AG04449 (cell line): ENCODE measurements at regions of chr2 and their contacts with region 1.

Region 1: DNA sequence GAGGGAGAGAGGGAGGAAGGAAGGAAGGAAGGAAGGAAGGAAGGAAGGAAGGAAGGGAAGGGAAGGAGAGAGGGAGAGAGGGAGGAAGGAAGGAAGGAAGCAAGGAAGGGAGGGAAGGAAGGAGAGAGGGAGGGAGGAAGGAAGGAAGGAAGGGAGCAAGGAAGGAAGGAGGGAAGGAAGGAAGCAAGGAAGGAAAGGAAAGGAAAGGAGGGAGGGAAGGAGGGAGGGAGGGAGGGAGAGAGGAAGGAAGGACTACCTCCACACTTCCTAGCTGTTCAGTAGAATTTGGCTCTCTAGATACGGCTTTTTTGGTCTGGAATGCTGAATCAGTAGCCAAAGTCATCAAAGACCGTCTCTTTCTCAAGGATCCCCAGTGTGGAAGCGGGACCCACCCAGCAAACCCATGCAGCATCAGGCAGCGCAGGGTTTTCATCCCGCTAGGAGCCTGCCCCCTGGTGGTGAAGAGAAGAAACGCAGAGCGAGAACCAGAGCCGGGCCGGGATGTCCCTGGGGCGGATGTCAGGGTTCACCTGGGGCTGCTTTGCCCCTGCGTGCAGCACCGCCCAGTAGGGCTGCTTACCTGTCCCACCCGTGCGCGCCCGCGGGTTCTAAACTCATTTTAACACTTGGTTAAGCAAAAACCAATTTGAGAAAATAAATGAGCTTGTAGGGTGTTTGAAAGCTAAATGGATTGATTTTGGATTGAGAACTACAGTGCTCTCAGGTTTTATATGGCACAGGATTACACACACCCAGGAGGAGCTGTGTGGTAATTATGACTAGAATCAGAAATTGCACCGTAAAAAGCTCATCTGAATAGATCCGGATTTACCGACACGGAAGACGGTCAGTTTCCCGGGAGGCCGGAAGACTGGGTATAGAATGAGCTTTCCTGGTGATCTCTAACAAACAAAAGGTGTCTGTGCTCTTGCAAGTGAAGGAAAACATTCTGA is 48.1 kb upstream of the ARL4C start:
- DNase-seq: no peak
- H3K4me3 ChIP-seq: no peak overlapping the region
- CTCF ChIP-seq: peak; percentile 92

Region 2: GRCh38 chr2:233976690-233977294 is 568.1 kb before region 1 on chr2:
- CTCF ChIA-PET with region 1: interaction called, 164 read pairs
- POLR2A ChIA-PET with region 1: no interaction called
- DNase-seq: peak; percentile 17
- H3K4me3 ChIP-seq: no peak overlapping the region
- CTCF ChIP-seq: peak; percentile 49

Region 3: GRCh38 chr2:233996000-233996399 is 548.9 kb before region 1 on chr2:
- CTCF ChIA-PET with region 1: interaction called, 10 read pairs
- POLR2A ChIA-PET with region 1: no interaction called
- DNase-seq: no peak
- H3K4me3 ChIP-seq: no peak overlapping the region
- CTCF ChIP-seq: no peak

Region 4: GRCh38 chr2:234512884-234513669 is 31.9 kb before region 1 on chr2:
- CTCF ChIA-PET with region 1: interaction called, 11 read pairs
- POLR2A ChIA-PET with region 1: no interaction called
- DNase-seq: no peak
- H3K4me3 ChIP-seq: no peak overlapping the region
- CTCF ChIP-seq: no peak

Region 5: DNA sequence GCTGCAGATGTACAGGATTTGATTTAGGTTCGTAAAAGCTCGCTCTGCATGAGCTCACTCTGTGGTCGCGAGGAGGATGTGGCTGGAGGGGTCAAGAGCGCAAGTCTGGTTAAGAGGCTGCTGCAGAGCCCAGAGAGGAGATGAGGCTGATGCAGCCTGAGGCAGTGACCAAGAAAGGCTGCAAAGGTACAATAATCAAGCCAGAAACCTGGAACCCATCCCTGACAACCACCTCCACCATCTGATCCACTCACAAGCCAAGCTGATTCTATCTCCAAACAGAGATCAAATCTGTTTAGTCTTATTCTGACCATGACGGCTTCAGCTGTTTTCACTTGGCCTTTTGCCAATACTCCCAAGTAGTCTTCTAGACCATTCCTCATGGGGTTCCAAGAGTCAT is 10.8 kb after region 1 on chr2:
- CTCF ChIA-PET with region 1: interaction called, 18 read pairs
- POLR2A ChIA-PET with region 1: no interaction called
- DNase-seq: no peak
- H3K4me3 ChIP-seq: no peak overlapping the region
- CTCF ChIP-seq: no peak

Region 6: DNA sequence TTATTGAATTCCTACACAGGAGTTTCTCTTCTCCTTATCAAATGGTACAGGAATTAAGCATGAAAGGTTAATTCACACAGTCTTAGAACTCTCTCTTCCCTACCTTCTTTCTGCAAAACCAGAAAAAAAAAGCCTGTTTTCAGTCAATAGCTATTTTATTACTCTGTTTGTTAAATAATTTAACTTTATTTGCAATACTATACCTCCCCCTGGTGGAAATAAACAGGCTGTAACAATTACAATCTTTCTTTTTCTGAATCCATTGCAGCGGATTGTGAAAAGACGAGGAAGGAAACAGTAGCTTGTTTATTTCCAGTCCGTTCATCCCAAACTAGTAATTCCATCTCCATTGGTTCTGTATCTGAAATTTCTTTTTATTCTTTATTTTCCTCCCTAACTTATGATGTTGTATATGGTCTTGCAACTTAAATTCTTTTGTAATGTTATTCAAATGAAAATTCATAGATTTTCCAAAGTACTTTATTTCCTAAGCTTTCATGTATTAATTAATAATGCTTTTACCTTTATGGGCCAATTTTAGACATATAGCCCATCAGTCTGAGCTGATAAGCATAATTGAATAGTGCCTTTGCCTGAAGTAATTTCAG is 572.1 kb after region 1 on chr2:
- CTCF ChIA-PET with region 1: interaction called, 154 read pairs
- POLR2A ChIA-PET with region 1: no interaction called
- DNase-seq: no peak
- H3K4me3 ChIP-seq: no peak overlapping the region
- CTCF ChIP-seq: peak; percentile 22